ENCODE measurements at regions of chr20 and their contacts with region 1.

Region 1: GRCh38 chr20:22575087-22575721 is 9.2 kb downstream of the FOXA2 start:
- DNase-seq: no peak
- H3K4me3 ChIP-seq: no peak overlapping the region
- H3K27ac ChIP-seq: no peak overlapping the region
- H3K4me1 ChIP-seq: peaks cover 2% of the 10 kb centered on the region; the same call in 1 of the 2 replicates
- H3K27me3 ChIP-seq: no peaks in the 10 kb centered on the region
- CTCF ChIP-seq: no peak

Region 2: GRCh38 chr20:22511943-22512910 is 63.0 kb before region 1 on chr20:
- CTCF ChIA-PET with region 1: no interaction called
- POLR2A ChIA-PET with region 1: no interaction called
- intact Hi-C with region 1: no loop called
- DNase-seq: peak in 1 of 2 experiments; percentile 61
- H3K4me3 ChIP-seq: no peak overlapping the region
- H3K27ac ChIP-seq: peak overlapping the region; percentile 18
- H3K4me1 ChIP-seq: peaks cover 24% of the 10 kb centered on the region
- H3K27me3 ChIP-seq: no peaks in the 10 kb centered on the region
- CTCF ChIP-seq: no peak

Region 3: DNA sequence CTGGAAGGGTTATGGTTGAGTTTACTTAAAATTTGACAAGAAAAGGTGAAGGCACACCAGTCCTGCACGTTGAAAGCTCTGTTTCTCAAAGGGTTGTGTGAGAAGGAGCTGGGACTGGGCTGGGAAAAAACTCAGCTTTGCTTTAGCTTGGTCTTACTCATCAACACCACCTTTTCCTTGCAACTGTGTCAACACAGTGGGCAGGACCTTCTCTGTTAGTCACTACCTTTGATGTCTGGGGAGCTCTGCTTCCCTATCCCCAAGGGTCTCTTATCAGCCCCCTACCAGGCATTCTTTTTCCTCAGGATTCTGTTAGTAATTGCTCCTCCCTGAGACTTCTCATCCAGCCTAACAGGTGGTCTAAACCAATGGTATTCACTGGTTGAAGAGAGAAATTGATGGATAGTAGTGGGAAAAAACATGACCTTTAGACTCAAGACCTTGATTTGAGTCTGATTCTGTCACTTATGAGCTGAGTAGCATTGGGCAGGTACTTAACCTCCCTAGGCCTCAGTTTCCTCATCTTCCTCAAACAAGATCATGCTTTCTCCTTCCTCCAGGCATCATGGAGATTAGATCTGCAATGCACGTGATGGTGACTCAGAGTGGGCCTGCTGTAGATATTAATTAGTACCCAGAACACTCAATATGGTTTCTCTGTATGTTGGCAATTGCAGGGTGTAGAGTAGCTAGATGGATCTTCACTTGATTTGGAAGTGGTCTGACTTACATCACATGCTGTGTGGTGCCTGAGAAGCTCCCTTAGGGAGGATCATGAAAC is 26.3 kb after region 1 on chr20:
- CTCF ChIA-PET with region 1: no interaction called
- POLR2A ChIA-PET with region 1: interaction called, 13 read pairs
- intact Hi-C with region 1: no loop called
- DNase-seq: peak in 1 of 2 experiments; percentile 36
- H3K4me3 ChIP-seq: no peak overlapping the region
- H3K27ac ChIP-seq: no peak overlapping the region
- H3K4me1 ChIP-seq: peaks cover 12% of the 10 kb centered on the region
- H3K27me3 ChIP-seq: no peaks in the 10 kb centered on the region
- CTCF ChIP-seq: no peak

Measured in PC-9 (cell line).